Upper lobe of right lung (tissue), 1 donor: ENCODE measurements at regions of chr3 and their contacts with region 1.

Region 1: DNA sequence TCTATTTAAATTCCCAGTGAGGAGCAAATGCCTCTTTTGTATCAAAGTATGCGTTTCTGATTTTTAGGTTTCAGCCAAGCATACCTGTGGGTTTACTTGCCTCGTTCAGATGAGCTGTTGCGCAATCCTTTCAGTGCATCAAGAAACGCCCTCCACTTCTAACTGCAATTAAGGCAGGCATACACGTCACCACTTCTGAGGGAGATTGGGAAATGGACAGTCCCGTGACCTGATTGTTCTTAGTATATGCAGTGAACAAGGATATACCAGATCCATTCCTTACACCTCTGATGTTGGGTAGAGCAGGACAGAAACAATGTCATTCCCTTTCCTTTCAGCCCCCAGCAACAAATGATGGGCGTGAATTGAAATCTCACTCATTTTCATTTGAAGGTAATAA is 219.0 kb downstream of the ITPR1 start:
- DNase-seq: no peak
- ATAC-seq: peak; percentile 83
- H3K4me3 ChIP-seq: peak overlapping the region; percentile 12
- H3K27ac ChIP-seq: peak overlapping the region; percentile 77
- H3K4me1 ChIP-seq: peaks cover 15% of the 10 kb centered on the region
- H3K27me3 ChIP-seq: no peaks in the 10 kb centered on the region
- CTCF ChIP-seq: no peak

Region 2: GRCh38 chr3:4601892-4602291 is 110.3 kb before region 1 on chr3:
- intact Hi-C with region 1: no loop called
- DNase-seq: no peak
- ATAC-seq: no peak
- H3K4me3 ChIP-seq: no peak overlapping the region
- H3K27ac ChIP-seq: no peak overlapping the region
- H3K4me1 ChIP-seq: peaks cover 2% of the 10 kb centered on the region
- H3K27me3 ChIP-seq: no peaks in the 10 kb centered on the region
- CTCF ChIP-seq: no peak

Region 3: GRCh38 chr3:4986782-4987537 is 274.8 kb after region 1 on chr3:
- intact Hi-C with region 1: loop called (anchors 10 kb)
- DNase-seq: peak; percentile 98
- ATAC-seq: peak; percentile 91
- H3K4me3 ChIP-seq: peak overlapping the region; percentile 50
- H3K27ac ChIP-seq: peak overlapping the region; percentile 100
- H3K4me1 ChIP-seq: peaks cover 54% of the 10 kb centered on the region
- H3K27me3 ChIP-seq: no peaks in the 10 kb centered on the region
- CTCF ChIP-seq: no peak

Region 4: DNA sequence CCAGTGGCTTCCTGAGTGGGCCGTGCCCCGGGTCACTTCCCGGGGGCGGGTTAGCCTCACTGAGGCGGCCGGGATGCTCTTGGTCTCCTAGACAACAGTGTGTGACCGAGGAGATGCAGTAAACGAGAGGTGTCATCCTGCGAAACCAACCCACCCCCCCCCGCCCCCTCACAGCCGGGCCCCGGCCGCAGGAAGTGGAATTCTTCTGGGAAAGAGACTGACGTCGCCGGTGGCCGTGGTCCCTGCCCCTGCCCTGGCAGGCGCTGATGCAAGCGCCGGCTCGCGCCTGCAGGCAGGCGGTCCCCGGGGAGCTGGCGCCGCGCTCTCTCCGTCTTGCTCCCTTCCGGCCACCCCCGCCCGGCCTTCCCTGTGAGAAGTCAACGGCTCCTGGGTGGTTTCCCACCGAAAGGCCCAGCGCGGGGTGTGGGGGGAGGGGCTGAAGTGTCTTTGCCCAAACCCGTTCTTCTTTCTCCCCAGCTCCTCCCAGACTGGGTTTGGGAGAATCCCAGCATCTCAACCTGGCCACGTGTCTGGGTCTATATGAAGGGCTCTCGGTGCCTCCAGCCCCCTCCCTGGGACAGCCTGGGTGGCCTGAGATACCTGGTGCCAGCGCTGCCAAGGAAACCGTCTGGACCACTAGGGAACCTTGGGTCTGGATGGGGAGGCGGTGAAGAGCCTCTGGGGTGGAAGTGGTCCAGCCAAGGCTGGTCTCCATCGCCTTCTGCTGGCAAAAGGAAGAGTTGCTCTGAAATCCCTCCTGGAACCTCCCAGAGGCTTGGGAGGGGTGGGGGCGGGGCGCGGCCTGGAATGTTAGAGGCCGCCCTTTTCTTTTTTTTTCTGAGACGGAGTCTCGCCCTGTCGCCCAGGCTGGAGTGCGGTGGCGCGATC is 314.4 kb after region 1 on chr3:
- intact Hi-C with region 1: loop called (anchors 10 kb)
- DNase-seq: peak; percentile 93
- ATAC-seq: peak; percentile 96
- H3K4me3 ChIP-seq: peak overlapping the region; percentile 52
- H3K27ac ChIP-seq: peak overlapping the region; percentile 76
- H3K4me1 ChIP-seq: peaks cover 3% of the 10 kb centered on the region
- H3K27me3 ChIP-seq: no peaks in the 10 kb centered on the region
- CTCF ChIP-seq: peak; percentile 63